Gastrocnemius medialis (tissue), 4 donors: ENCODE measurements at regions of chr17 and their contacts with region 1.

Region 1: DNA sequence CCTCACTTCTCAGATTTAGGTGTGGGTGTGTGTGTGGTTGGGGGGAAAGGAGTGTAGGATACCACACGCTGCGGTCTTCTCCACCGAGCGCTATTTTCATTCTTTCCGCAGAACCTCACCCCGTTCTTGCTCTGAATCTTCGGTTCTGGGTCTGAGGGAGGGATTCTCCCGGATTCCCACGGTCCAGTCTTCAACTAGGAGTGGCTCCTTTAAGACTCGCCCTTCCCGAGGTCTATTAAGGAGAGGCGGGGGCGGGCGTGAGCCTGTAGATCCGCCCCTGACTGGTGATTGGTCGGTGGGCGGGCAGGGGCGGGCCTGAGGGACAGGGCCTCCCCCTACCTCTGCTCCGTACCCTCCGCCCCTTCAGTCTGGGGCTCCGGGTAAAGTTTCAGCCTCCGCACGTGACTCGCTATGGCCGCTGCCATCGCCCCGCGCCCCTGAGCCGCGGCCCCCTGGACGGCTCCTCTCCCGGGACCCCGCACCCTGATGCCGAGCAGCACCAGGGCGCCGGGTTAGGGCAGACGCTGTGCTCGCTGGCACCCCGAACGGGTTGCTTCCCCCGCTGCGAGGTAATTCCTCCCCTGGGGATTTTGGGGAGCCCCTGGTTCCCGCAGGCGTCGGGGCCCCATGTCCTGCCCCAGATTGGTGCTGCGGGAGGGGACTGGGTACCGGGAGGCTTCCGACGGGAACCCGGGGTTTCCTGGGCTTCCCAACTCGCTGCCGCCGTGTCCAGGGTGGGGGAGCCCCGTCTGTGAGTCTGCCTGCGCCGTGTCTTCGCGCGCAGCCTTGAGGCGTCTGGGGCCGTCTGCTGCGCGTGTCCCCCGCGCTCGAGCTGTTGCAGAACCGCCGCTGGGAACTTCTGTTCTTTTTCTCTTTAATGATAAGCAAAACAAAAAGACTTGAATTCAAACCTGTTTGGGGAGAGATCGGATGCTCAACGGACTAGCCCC is 9.2 kb downstream of the RARA start:
- DNase-seq: peak; percentile 97 to 98
- ATAC-seq: peak; percentile 43 to 66
- H3K4me3 ChIP-seq: peak overlapping the region; percentile 82 to 100 (median 90)
- H3K27ac ChIP-seq: peak overlapping the region; percentile 95 to 100 (median 98)
- H3K4me1 ChIP-seq: peaks cover 76 to 89% of the 10 kb centered on the region in 2 donors
- H3K27me3 ChIP-seq: no peaks in the 10 kb centered on the region
- CTCF ChIP-seq: no peak
- POLR2A ChIP-seq: peak; percentile 98

Region 2: GRCh38 chr17:40019140-40019991 is 298.8 kb before region 1 on chr17:
- in situ Hi-C with region 1: no loop called
- intact Hi-C with region 1: loop called (anchors 10 kb)
- DNase-seq: peak; percentile 84 to 94
- ATAC-seq: peak; percentile 44 to 45
- H3K4me3 ChIP-seq: peak overlapping the region in 2 of 4 donors; percentile 54 to 64
- H3K27ac ChIP-seq: peak overlapping the region; percentile 87 to 99 (median 94)
- H3K4me1 ChIP-seq: peaks cover 78 to 85% of the 10 kb centered on the region in 2 donors
- H3K27me3 ChIP-seq: no peaks in the 10 kb centered on the region
- CTCF ChIP-seq: peak in 4 of 5 experiments; percentile 25 to 39 (median 35)
- POLR2A ChIP-seq: peak; percentile 60 to 67

Region 3: DNA sequence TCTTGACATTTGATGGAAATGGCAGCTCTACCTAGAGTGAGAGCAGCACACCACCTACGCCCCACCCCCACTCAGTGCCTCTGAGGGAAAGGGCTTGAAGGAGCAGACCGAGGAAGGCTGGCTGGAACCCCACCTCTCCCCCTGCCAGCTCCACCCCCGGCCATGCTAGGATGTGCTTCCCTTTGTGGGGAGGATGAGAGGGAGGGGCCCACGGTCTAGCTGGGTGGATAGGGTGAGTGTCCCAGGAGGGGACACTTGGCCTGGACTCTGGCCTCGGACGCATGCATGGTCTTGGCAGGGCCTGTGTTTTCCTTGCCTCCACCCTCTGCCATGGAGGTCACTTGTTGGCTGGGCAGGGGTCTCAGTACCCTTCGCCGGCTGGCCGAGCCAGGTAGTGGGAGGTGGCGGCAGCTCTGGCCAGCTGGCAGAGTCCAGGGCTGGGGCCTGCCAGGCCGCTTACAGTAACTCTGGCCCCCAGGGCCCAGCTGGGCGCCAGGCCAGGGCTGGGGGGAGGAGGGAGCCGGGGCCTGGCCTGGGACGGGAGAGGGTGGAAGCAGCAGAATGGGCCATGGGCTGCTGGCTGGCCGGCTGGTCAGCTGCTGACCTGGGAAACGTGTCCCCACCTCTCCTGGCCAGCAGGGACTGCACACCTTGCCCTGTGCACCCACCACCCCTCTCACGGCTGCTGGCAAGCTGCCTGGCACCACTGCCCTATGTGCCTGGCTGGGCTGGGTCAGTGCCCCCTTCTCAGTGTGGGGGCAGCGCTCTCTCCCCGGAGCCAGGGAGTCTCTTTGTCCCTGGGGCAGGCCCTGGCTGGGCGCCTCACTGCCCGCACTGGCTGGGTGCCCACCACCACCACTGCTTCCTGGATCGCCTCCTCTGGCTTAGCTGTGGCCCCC is 13.8 kb after region 1 on chr17:
- in situ Hi-C with region 1: no loop called
- intact Hi-C with region 1: loop called (anchors 2 kb)
- DNase-seq: peak; percentile 73 to 96
- ATAC-seq: peak; percentile 52 to 58
- H3K4me3 ChIP-seq: peak overlapping the region; percentile 23 to 47 (median 26)
- H3K27ac ChIP-seq: peak overlapping the region; percentile 95 to 100 (median 98)
- H3K4me1 ChIP-seq: peaks cover 97 to 99% of the 10 kb centered on the region in 2 donors
- H3K27me3 ChIP-seq: no peaks in the 10 kb centered on the region
- CTCF ChIP-seq: peak in 4 of 5 experiments; percentile 15 to 43 (median 30)
- POLR2A ChIP-seq: no peak

Region 4: GRCh38 chr17:40340880-40341807 is 23.0 kb after region 1 on chr17:
- in situ Hi-C with region 1: no loop called
- intact Hi-C with region 1: loop called (anchors 1 kb)
- DNase-seq: peak; percentile 91 to 97
- ATAC-seq: peak; percentile 77
- H3K4me3 ChIP-seq: peak overlapping the region; percentile 70 to 81 (median 76)
- H3K27ac ChIP-seq: peak overlapping the region; percentile 95 to 100 (median 98)
- H3K4me1 ChIP-seq: peaks cover 75 to 86% of the 10 kb centered on the region in 2 donors
- H3K27me3 ChIP-seq: no peaks in the 10 kb centered on the region
- CTCF ChIP-seq: no peak
- POLR2A ChIP-seq: peak; percentile 86 to 91

Region 5: GRCh38 chr17:41688699-41689496 is 1370.7 kb after region 1 on chr17 and contains the start of gene EIF1:
- in situ Hi-C with region 1: no loop called
- intact Hi-C with region 1: loop called (anchors 2 kb)
- DNase-seq: peak; percentile 100
- ATAC-seq: peak; percentile 85 to 87
- H3K4me3 ChIP-seq: peak within 1 kb of the TSS; percentile 94 to 100 (median 96)
- H3K27ac ChIP-seq: peak within 1 kb of the TSS; percentile 99 to 100 (median 100)
- H3K4me1 ChIP-seq: peaks cover 28 to 30% of the 10 kb centered on the region in 2 donors
- H3K27me3 ChIP-seq: no peaks in the 10 kb centered on the region
- CTCF ChIP-seq: no peak
- POLR2A ChIP-seq: peak; percentile 100
- total RNA-seq, gene EIF1: 222 to 842 (median 375) TPM